ENCODE measurements at regions of chr9 and their contacts with region 1.

Region 1: DNA sequence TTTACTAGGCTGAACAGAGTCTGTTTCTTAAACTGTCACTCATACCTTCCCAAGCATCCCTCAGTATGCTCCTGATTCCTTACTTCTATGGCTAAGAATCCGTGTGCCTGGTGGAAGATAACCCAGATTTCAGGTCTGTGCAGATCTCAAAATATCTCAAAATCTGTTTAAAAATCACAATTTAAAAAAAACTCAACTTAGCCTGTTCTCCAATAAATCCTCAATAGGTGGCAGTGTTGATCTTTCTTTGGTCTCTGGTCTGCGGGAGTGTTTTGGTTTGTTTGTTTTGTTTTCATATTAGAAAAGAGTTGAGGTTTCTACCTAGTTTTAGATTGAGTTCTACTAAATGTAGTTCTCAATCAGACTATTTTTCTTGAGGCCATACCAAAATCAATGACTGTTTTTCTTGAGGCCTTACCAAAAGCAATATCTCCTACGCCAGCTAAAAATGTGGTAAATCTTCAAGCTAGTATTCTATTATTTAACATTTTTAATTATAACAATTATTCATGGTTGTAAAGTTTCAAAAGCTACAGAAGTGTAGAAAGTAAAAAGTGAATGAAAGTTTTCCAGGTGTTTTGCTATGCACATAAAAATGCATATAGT is 57.9 kb downstream of the TGFBR1 start:
- DNase-seq: no peak
- ATAC-seq: no peak
- H3K4me3 Mint-ChIP-seq: no peak overlapping the region
- H3K27ac Mint-ChIP-seq: no peak overlapping the region
- H3K4me1 Mint-ChIP-seq: peaks cover 47% of the 10 kb centered on the region
- H3K27me3 Mint-ChIP-seq: peaks cover 10% of the 10 kb centered on the region

Region 2: GRCh38 chr9:99150451-99151171 is 12.3 kb before region 1 on chr9:
- CTCF ChIA-PET with region 1: interaction called, 14 read pairs
- POLR2A ChIA-PET with region 1: no interaction called
- DNase-seq: peak; percentile 45
- ATAC-seq: peak; percentile 97
- H3K4me3 Mint-ChIP-seq: peak overlapping the region; percentile 32
- H3K27ac Mint-ChIP-seq: peak overlapping the region; percentile 70
- H3K4me1 Mint-ChIP-seq: peaks cover 58% of the 10 kb centered on the region
- H3K27me3 Mint-ChIP-seq: peaks cover 2% of the 10 kb centered on the region

Region 3: DNA sequence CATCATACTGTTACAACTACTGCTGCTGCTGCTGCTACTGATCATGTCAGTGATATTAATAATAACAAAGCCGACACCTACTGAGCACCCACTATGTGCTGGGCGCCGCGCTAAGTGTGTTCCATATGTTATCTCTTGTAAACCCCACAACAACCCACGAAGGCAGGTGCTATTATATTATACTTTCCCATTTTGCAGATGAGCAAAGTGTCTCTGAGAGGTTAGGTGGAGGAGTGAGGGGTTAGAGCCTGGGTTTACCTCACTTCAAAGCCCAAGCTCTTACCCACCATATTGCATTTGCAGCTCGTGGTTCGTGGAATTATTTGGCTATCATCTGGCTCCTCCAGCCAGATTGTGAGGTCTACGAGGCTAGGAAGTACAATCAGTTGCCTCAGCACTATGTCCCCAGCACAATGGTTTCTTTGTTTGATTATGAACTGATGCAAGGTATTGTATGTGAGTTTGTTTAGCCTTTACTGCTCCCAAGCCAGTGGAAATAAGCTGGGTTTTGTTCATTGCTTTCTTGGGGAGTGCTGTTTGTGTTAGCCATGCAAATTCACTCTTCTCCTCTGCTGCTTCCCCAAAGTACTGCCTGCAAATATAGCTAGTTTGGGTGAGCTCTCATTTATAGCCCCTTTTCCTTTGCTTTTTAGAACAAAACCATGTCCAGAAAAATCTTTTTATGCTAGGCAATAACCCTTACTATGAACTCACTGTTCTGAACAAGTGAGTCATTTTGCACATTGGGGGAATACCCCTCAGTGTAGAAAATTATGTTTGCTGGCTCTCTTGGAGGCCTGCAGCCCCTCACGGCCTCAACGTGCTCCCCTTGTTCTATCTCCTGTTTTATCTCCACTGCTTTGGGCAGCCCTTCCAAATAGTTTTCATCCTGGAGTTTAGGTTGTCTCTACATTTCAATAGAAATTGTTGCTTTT is 11.0 kb after region 1 on chr9:
- CTCF ChIA-PET with region 1: interaction called, 20 read pairs
- POLR2A ChIA-PET with region 1: interaction called, 4 read pairs
- DNase-seq: peak; percentile 16
- ATAC-seq: no peak
- H3K4me3 Mint-ChIP-seq: no peak overlapping the region
- H3K27ac Mint-ChIP-seq: no peak overlapping the region
- H3K4me1 Mint-ChIP-seq: peaks cover 8% of the 10 kb centered on the region
- H3K27me3 Mint-ChIP-seq: no peaks in the 10 kb centered on the region

Region 4: GRCh38 chr9:99178912-99179872 is 16.3 kb after region 1 on chr9:
- CTCF ChIA-PET with region 1: interaction called, 115 read pairs
- POLR2A ChIA-PET with region 1: interaction called, 7 read pairs
- DNase-seq: peak; percentile 23
- ATAC-seq: no peak
- H3K4me3 Mint-ChIP-seq: no peak overlapping the region
- H3K27ac Mint-ChIP-seq: no peak overlapping the region
- H3K4me1 Mint-ChIP-seq: peaks cover 59% of the 10 kb centered on the region
- H3K27me3 Mint-ChIP-seq: no peaks in the 10 kb centered on the region